Endothelial cell of umbilical vein (primary cell): ENCODE measurements at regions of chr6 and their contacts with region 1.

Region 1: GRCh38 chr6:110039364-110039980 is 61.4 kb downstream of the GPR6 start:
- DNase-seq: peak; percentile 92
- H3K4me3 ChIP-seq: peak overlapping the region in 1 of 3 experiments; percentile 14
- H3K27ac ChIP-seq: no peak overlapping the region
- H3K4me1 ChIP-seq: no peaks in the 10 kb centered on the region
- H3K27me3 ChIP-seq: peaks cover 4% of the 10 kb centered on the region in 2 experiments
- CTCF ChIP-seq: peak; percentile 84 to 89
- POLR2A ChIP-seq: no peak

Region 2: DNA sequence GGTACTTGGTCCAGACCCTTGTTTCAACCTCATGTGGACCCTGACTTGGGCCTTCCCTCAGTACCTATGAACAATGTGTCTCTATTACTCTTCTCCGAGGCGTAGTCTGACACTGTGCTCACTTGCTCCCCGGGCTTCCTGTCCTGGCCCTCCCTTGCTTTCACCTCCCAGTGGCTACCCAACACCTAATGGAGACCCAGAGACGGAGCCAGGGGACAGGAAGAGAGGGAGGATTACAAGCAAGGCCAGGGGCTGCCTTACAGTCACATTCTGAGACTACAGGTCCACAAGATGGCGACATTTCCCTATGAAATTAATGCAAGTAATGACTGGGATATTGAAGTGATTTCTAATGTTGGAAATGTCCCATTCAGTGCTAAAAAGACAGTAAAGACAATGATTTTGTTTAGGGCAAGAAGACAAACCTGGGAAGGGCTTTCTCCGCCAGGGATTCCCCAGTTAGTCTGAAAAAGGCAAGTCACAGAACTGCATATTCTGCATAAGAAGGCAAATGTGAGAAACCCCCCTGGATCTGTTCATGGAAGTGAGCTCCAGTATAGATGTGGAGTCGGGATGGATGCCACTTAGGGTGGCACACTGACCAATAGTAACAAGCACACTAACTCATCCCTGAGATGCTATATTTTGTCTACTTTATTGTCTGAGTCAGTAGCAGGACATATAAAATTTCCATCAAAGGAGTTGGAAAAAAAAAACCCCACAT is 512.4 kb before region 1 on chr6:
- CTCF ChIA-PET with region 1: interaction called, 118 read pairs
- POLR2A ChIA-PET with region 1: no interaction called
- dilution Hi-C with region 1: no loop called
- intact Hi-C with region 1: loop called (anchors 1 kb)
- DNase-seq: peak; percentile 67
- H3K4me3 ChIP-seq: no peak overlapping the region
- H3K27ac ChIP-seq: no peak overlapping the region
- H3K4me1 ChIP-seq: no peaks in the 10 kb centered on the region
- H3K27me3 ChIP-seq: no peaks in the 10 kb centered on the region
- CTCF ChIP-seq: peak; percentile 45 to 60
- POLR2A ChIP-seq: no peak

Region 3: DNA sequence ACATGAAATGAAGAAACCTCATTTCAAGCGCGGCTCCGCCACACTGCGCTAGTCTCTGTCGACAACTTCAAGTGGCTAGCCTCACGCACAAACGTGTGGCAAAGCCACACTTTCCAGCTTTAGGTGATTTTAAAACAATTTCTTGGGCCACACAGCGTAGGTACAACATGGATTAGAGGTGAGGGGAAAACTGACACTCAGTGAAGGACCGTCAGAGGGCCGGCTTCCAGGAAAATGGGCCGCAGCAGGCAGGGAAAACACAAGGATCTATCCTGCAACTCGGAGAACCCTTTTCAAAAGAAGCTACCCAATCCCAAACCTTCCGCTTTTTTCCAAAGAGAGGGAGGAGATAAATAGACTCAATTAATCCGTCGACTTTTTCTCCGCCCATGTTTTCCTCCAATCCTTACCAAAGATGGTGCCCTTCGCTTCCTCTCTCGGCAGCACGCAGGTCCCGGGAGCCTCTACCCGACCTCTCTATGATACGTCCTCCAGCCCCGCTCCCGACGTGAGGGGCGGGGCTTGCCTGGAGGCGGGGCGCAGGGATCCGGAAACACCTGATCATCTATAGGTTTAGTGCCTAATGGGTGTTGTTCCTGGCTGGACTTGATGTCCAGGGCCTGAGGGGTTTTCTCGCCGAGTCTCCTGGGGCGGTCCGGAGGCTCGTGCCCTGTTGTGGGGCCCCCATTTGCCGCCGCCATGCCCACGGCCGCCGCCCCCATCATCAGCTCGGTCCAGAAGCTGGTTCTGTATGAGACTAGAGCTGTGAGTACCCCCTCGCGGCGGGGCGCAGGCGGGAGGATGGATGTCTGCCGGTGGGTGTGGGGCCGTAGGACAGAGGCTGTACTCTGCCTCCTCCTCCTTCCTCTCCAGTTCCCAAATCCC is 348.5 kb before region 1 on chr6 and contains the starts of genes AK9 and FIG4:
- CTCF ChIA-PET with region 1: interaction called, 24 read pairs
- POLR2A ChIA-PET with region 1: no interaction called
- dilution Hi-C with region 1: no loop called
- intact Hi-C with region 1: loop called (anchors 1 kb)
- DNase-seq: peak; percentile 95
- H3K4me3 ChIP-seq: peak within 1 kb of the TSS; percentile 54 to 89 (median 55)
- H3K27ac ChIP-seq: peak within 1 kb of the TSS; percentile 73
- H3K4me1 ChIP-seq: peaks cover 10% of the 10 kb centered on the region
- H3K27me3 ChIP-seq: no peaks in the 10 kb centered on the region
- CTCF ChIP-seq: peak; percentile 10 to 43
- POLR2A ChIP-seq: peak; percentile 63
- total RNA-seq, gene AK9: 3.2 and 4.0 TPM in 2 replicates
- total RNA-seq, gene FIG4: 11.5 and 12.2 TPM in 2 replicates

Region 4: GRCh38 chr6:109718991-109719390 is 320.5 kb before region 1 on chr6:
- CTCF ChIA-PET with region 1: interaction called, 36 read pairs
- POLR2A ChIA-PET with region 1: no interaction called
- dilution Hi-C with region 1: no loop called
- intact Hi-C with region 1: no loop called
- DNase-seq: no peak
- H3K4me3 ChIP-seq: no peak overlapping the region
- H3K27ac ChIP-seq: no peak overlapping the region
- H3K4me1 ChIP-seq: no peaks in the 10 kb centered on the region
- H3K27me3 ChIP-seq: no peaks in the 10 kb centered on the region
- CTCF ChIP-seq: no peak
- POLR2A ChIP-seq: no peak

Region 5: DNA sequence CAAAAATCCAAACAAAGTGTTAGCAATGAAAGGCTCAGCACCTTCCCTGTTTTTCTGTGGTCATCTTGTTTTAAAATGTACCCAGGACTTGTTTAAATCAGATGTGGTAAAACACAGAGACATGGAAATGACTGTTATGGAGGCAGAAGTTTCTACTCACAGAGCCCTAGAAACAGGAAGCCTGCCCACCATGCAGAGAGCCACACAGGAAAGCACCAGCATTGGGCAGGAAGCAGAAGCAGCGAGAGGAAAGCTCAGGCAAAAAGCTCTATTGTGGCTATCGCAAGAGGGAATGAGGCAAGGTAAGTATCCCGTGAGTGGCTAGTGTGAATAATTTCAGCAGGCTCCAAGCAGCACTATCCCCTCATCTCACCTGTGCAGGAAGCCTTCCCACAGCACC is 18.6 kb before region 1 on chr6:
- CTCF ChIA-PET with region 1: interaction called, 19 read pairs
- POLR2A ChIA-PET with region 1: no interaction called
- dilution Hi-C with region 1: no loop called
- intact Hi-C with region 1: no loop called
- DNase-seq: no peak
- H3K4me3 ChIP-seq: no peak overlapping the region
- H3K27ac ChIP-seq: no peak overlapping the region
- H3K4me1 ChIP-seq: no peaks in the 10 kb centered on the region
- H3K27me3 ChIP-seq: peaks cover 3 to 4% of the 10 kb centered on the region in 2 experiments
- CTCF ChIP-seq: no peak
- POLR2A ChIP-seq: no peak

Region 6: DNA sequence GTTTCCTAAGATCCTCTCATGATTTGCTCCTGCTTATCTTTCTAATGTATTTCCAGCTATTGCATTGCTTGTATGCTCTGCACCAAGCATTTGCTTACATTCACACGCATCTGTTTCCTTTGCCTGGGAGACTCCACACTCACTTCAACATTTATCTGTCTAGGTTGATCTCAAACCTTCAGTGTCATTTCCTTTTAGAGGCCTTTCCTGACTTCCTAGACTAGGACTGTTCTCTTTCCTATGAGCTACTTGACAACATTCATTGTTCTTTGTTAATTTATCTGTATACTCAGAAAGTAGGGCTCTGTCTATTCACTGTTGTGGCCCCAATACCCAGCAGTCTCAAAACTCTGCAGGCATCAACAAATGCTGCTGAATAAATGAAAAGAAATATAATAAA is 55.6 kb after region 1 on chr6:
- CTCF ChIA-PET with region 1: interaction called, 13 read pairs
- POLR2A ChIA-PET with region 1: no interaction called
- dilution Hi-C with region 1: no loop called
- intact Hi-C with region 1: no loop called
- DNase-seq: peak; percentile 93
- H3K4me3 ChIP-seq: no peak overlapping the region
- H3K27ac ChIP-seq: peak overlapping the region; percentile 80
- H3K4me1 ChIP-seq: peaks cover 36% of the 10 kb centered on the region
- H3K27me3 ChIP-seq: no peaks in the 10 kb centered on the region
- CTCF ChIP-seq: no peak
- POLR2A ChIP-seq: no peak